ENCODE measurements at regions of chr3 and their contacts with region 1.

Region 1: GRCh38 chr3:127762077-127762786 is 60.1 kb downstream of the MGLL start:
- DNase-seq: peak; percentile 69
- CTCF ChIP-seq: no peak

Region 2: DNA sequence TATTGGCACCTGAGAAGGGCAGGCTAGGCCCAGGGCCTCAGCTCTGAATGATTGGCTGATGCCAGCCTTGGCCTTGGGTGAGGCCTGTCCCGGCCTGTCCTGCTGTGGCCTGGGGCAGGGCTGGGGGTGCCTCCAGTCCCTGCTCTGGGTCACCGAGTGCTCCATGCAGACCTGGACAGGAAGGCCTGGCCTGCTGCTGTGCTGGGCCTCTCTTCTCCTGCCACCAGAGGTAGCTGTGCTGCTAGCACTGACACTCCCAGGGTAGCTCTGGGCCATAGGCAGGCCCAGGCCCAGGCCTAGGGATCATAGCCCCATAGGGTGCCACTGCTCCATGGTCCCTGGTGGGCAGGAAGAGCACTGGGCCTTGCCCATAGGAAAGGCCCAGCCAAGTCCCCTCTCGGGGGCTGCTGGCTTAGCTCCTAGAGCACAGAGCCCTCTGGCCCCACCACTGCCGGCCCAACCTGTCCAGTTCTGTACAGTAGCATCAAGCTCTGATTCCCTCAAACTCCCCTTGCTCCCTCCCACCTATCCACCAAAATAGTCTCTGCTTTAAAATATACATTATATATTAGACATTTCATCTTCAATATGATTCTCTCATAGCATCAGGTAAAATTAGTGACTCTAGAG is 71.3 kb before region 1 on chr3:
- CTCF ChIA-PET with region 1: no interaction called
- POLR2A ChIA-PET with region 1: no interaction called
- DNase-seq: no peak
- CTCF ChIP-seq: peak; percentile 63

Region 3: DNA sequence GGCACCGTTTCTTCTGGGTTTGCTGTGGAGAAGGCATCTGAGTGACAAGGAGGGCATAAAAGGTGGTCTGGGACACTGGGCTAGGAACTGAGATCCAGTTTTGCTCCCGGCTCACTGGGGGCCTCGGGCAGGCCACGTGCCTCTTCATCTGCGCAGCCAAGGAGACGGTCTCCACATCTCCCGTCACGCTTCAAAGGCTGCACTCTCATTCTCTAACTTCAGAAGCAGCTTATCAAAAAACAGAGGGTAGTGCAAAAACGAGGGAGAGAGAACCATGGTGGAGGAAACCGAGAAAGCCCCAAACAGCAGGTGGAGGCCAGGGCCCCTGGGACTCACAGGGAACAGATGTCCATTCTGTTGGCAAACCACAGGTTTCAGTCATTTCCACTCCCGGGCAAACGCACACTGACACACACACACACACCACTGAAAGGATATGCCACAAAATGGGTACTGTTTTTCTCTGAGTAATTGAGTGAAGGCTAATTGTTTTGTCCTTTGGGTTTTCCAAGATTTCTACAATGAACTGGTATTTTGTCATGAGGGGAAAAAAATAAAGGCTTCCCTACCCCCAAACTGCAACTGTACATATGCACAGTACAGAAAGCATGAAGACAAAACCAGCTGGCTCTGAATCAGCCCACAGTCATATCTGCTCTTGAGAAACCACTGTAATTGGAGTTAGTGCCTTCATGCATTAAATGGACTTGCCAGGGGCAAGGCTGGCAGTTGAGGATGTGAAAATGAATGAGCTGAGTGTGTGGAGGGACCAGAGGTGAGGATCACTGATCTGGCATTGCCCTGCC is 11.8 kb before region 1 on chr3:
- CTCF ChIA-PET with region 1: interaction called, 112 read pairs
- POLR2A ChIA-PET with region 1: interaction called, 19 read pairs
- DNase-seq: no peak
- CTCF ChIP-seq: no peak

Region 4: GRCh38 chr3:127791211-127791946 is 29.1 kb after region 1 on chr3:
- CTCF ChIA-PET with region 1: interaction called, 12 read pairs
- POLR2A ChIA-PET with region 1: no interaction called
- DNase-seq: peak; percentile 81
- CTCF ChIP-seq: peak; percentile 67

Region 5: GRCh38 chr3:128107834-128108233 is 345.6 kb after region 1 on chr3:
- CTCF ChIA-PET with region 1: no interaction called
- POLR2A ChIA-PET with region 1: no interaction called
- DNase-seq: no peak
- CTCF ChIP-seq: no peak